ENCODE measurements at regions of chr16 and their contacts with region 1.

Region 1: GRCh38 chr16:68902008-68902968 is 59.0 kb downstream of the TANGO6 start:
- DNase-seq: no peak

Region 2: GRCh38 chr16:68973700-68974099 is 71.4 kb after region 1 on chr16:
- intact Hi-C with region 1: loop called in 1 of 2 experiments (anchors 2 kb)
- DNase-seq: no peak

Region 3: DNA sequence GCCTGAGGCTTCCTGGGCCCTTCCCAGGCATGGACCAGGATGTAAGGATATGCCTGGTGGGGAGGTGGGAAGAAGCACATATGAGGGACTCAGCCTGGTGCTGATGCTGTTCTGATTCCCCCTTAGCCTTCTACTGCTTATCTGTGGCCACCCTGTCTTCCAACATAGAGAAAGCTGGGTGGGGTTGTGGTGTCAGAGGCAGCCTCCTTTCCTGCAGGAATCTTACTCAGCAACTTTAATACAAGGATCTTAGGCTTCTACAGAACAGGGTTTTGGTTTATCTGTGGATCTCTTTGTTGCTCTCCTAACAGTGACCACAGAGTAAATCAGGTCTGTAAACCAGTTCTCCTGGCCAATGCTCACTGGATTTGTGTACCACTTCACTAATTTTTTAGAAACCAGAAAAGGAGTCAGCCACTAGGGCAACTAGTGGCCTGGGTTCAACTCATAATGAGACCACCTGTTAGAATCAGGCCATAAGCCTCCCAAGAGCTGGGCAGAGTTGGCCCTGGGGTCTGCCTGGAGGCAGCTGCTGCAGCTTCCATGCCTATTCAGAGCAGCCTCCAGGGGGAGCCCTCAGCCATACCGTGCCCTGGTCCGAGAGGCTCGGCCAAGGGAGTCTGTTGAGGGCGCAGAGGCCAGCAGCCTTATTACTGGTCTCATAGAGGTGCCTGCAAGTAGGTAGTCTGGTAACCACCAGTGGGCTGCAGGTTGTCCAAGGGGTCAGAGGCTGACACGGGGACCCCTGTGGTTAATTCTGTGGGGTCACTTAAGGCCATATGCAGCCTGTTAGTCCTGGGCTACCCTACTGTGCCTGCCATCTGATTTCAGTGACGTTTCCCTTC is 210.2 kb after region 1 on chr16:
- intact Hi-C with region 1: loop called in 1 of 2 experiments (anchors 10 kb)
- DNase-seq: peak; percentile 86

Region 4: GRCh38 chr16:69253870-69254341 is 351.6 kb after region 1 on chr16:
- intact Hi-C with region 1: no loop called
- DNase-seq: no peak

Region 5: GRCh38 chr16:69309316-69309715 is 407.0 kb after region 1 on chr16:
- intact Hi-C with region 1: loop called in 1 of 2 experiments (anchors 10 kb)
- DNase-seq: peak; percentile 78

Measured in posterior vena cava (tissue), 2 donors.